Colonic mucosa (tissue), 4 donors: ENCODE measurements at regions of chr7 and their contacts with region 1.

Region 1: DNA sequence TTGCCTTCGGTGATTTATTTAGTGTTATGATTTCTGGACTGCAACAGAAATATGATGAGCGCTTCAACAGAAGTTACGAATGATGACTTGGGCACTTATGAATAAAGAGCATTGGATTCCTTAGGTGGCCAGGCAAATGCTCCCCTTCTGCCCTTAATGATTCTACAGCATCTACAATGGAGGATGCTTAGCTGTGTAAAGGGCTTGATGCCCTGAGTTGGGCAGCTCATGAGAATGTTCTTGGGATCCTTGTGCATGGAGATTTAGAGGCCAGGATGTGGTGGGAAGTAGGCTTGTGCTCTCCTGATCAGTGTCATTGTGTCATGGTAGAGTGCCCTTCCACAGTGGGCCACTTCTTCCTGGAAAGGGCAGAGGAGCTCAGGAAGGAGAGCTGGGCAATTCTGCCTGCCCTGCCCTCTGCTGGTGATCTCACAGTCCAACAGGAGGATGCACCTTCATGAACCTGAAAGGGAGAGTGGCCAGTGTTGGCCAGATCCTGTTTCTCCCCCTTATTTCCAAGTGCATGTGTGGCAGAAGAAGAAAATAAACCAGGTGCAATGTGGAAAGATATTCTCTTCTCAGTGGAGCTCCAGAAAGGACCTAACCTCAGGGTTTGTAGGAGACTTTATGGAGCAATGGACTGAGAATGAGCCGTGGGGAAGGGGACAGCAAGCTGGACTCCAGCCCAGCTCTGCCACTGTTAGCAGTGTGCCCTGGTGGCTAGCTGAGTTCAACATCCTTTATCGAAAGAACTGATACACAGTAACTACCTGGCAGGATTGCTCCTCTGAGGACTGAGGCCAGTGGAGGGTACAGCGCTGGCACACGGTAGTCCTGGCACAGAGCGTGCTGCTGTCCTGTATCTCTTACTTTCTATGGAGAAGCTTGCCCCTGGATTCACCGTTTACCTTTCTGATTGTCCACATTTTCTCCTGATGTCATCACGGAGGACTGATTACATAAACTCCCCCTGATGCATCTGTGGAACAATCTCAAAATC is 182.9 kb downstream of the BMPER start:
- DNase-seq: peak; percentile 52
- H3K4me3 ChIP-seq: no peak overlapping the region
- H3K27ac ChIP-seq: no peak overlapping the region
- H3K4me1 ChIP-seq: no peaks in the 10 kb centered on the region
- H3K27me3 ChIP-seq: no peaks in the 10 kb centered on the region
- CTCF ChIP-seq: peak; percentile 27

Region 2: DNA sequence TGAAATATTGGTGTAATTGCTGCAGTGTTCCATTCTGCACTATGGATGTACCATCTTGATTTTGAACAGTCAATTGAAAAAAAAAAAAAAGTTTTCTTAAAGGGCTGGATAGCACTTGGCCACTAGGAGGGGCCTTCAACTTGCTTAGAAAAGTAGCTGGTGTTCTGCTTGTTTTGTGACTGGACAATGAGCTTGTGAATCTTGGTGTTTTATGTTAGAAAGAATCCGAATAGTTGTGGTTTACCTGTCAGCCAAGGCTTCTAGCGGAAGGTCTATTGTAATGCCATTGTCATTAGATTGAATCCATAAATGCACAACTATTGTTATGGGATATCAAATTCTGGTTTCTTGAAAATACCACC is 105.8 kb before region 1 on chr7:
- intact Hi-C with region 1: loop called (anchors 5 kb)
- DNase-seq: no peak
- H3K4me3 ChIP-seq: no peak overlapping the region
- H3K27ac ChIP-seq: no peak overlapping the region
- H3K4me1 ChIP-seq: no peaks in the 10 kb centered on the region
- H3K27me3 ChIP-seq: no peaks in the 10 kb centered on the region
- CTCF ChIP-seq: peak; percentile 18

Region 3: DNA sequence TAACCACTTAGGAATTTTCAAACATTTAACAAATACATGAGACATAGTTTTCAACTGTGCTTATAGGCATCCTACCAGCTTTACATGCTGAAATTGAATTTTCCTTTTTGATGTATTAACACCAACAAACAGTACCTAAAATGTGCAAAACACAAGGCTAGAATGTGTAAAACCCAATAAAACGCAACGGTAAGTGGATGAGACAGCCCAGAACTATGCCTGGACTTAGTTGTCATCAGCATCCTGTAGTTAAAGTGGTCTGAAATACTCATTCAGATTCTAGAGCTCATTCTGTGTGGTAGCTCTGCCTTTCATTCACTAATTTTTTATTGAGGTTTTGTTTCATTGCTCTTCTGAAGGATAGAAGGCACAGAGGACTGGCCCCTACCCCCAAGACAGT is 45.8 kb before region 1 on chr7:
- intact Hi-C with region 1: no loop called
- DNase-seq: no peak
- H3K4me3 ChIP-seq: no peak overlapping the region
- H3K27ac ChIP-seq: no peak overlapping the region
- H3K4me1 ChIP-seq: no peaks in the 10 kb centered on the region
- H3K27me3 ChIP-seq: no peaks in the 10 kb centered on the region
- CTCF ChIP-seq: no peak

Region 4: GRCh38 chr7:34298492-34299013 is 210.4 kb after region 1 on chr7:
- intact Hi-C with region 1: no loop called
- DNase-seq: no peak
- H3K4me3 ChIP-seq: no peak overlapping the region
- H3K27ac ChIP-seq: no peak overlapping the region
- H3K4me1 ChIP-seq: no peaks in the 10 kb centered on the region
- H3K27me3 ChIP-seq: no peaks in the 10 kb centered on the region
- CTCF ChIP-seq: no peak